ENCODE measurements at regions of chr20 and their contacts with region 1.

Region 1: GRCh38 chr20:46022411-46023147 is 6.4 kb upstream of the SLC12A5 start:
- DNase-seq: peak; percentile 82
- H3K4me3 ChIP-seq: peak overlapping the region; percentile 75
- H3K27ac ChIP-seq: no peak overlapping the region
- H3K4me1 ChIP-seq: peaks cover 18% of the 10 kb centered on the region
- CTCF ChIP-seq: peak; percentile 91

Region 2: DNA sequence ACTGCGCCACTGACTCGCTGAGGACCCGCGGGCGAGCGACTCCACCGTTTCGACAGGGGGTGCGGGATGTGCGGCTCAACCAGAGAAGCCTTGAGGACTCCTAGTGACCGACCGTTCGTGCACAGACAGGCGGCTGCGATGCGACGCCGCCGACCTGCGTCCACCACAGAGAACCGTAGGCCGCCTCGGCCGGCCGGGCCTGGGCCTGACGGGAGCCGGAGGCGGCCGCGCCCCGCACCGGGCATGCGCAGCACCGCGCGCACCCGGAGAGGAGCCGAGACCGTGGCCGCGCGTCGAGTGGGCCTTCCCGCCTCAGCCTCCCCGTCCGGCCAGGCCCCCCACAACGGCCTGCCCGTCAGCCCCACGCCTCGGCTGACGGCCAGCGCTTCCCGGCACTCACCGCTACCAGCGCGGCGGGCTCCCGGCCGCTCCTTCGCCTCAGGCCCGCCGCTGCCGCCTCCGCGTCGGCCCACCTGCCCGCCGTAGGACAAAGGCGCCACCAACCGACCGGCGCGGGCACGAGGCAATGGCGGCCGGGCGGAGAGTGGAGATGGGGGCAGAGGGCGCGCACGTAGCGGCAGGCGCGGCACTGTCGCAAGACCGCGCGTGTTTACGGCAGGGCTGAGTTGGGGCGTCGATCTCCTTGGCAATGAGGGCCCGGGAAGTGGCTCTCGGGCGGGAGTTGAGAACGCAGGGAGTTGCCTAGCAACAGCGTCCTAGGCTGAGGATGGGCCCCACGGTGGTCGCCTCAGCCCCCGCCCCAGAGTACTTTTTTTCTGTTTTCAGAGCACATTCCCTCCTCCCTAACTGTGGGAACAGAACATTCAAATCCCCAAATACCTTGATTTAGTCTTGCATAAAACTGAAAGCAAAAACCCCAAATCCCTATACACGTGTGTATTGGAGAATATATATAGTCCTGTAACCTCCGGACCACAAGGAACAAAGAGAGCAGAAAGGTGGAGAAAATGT is 67.1 kb after region 1 on chr20 and contains the start of gene NCOA5:
- CTCF ChIA-PET with region 1: no interaction called
- POLR2A ChIA-PET with region 1: no interaction called
- intact Hi-C with region 1: loop called (anchors 1 kb)
- DNase-seq: peak; percentile 97
- H3K4me3 ChIP-seq: peak within 1 kb of the TSS; percentile 81
- H3K27ac ChIP-seq: peak within 1 kb of the TSS; percentile 60
- H3K4me1 ChIP-seq: peaks cover 35% of the 10 kb centered on the region
- CTCF ChIP-seq: peak; percentile 38; the same call in 1 of the 2 replicates
- total RNA-seq, gene NCOA5: 21.8 and 23.4 TPM in 2 replicates

Region 3: GRCh38 chr20:46132705-46133120 is 110.1 kb after region 1 on chr20:
- CTCF ChIA-PET with region 1: no interaction called
- POLR2A ChIA-PET with region 1: no interaction called
- intact Hi-C with region 1: loop called (anchors 5 kb)
- DNase-seq: peak; percentile 74
- H3K4me3 ChIP-seq: no peak overlapping the region
- H3K27ac ChIP-seq: no peak overlapping the region
- H3K4me1 ChIP-seq: no peaks in the 10 kb centered on the region
- CTCF ChIP-seq: peak; percentile 88

Region 4: DNA sequence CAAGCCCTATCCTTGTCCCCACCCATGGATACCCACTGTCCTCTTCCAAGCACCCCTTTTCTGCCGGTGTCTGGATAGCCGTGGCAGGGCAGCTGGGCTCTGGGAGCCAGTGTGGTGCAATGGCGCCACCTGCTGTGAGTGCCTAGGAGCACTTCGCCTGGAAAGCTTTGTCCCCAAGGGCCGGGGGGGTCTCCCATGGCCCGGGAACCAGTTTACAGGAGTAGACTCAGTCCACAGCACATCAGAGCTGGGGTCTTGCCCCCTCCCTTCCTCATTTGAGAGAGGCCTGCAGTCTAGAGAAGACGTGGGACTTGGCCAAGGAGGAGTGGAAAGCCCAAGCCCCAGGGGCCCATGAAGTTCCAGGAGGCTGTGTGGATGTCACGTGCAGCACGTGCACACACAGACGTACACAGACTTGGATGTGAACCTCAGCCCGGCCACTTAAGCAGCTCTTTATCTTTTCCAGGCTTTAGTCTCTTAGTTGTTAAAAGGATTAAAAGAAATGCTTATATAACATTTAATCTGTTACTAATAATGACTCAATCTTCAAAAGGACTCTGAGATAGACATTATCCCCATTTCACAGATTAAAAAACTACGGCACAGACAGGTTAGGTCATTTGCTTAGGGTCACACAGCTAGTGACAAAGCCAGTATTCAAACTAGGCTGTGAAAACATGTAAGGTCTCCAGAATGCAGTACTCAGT is 326.6 kb after region 1 on chr20:
- CTCF ChIA-PET with region 1: no interaction called
- POLR2A ChIA-PET with region 1: no interaction called
- intact Hi-C with region 1: loop called (anchors 5 kb)
- DNase-seq: peak; percentile 59
- H3K4me3 ChIP-seq: peak overlapping the region; percentile 17
- H3K27ac ChIP-seq: peak overlapping the region; percentile 57
- H3K4me1 ChIP-seq: peaks cover 24% of the 10 kb centered on the region
- CTCF ChIP-seq: peak; percentile 92

Region 5: GRCh38 chr20:46702447-46703203 is 680.0 kb after region 1 on chr20:
- CTCF ChIA-PET with region 1: interaction called, 11 read pairs
- POLR2A ChIA-PET with region 1: no interaction called
- intact Hi-C with region 1: no loop called
- DNase-seq: no peak
- H3K4me3 ChIP-seq: no peak overlapping the region
- H3K27ac ChIP-seq: no peak overlapping the region
- H3K4me1 ChIP-seq: no peaks in the 10 kb centered on the region
- CTCF ChIP-seq: no peak

Measured in OCI-LY7 (cell line).